Body of pancreas (tissue), 4 donors: ENCODE measurements at regions of chr9 and their contacts with region 1.

Region 1: GRCh38 chr9:74570879-74571512 is 73.9 kb downstream of the RORB start:
- DNase-seq: peak in 3 of 4 donors; percentile 12 to 32 (median 16)
- ATAC-seq: no peak
- H3K4me3 ChIP-seq: no peak overlapping the region
- H3K27ac ChIP-seq: no peak overlapping the region
- H3K4me1 ChIP-seq: no peaks in the 10 kb centered on the region
- H3K27me3 ChIP-seq: peaks cover 0 to 4% of the 10 kb centered on the region in 2 donors
- CTCF ChIP-seq: peak; percentile 17 to 84 (median 65)
- POLR2A ChIP-seq: no peak

Region 2: DNA sequence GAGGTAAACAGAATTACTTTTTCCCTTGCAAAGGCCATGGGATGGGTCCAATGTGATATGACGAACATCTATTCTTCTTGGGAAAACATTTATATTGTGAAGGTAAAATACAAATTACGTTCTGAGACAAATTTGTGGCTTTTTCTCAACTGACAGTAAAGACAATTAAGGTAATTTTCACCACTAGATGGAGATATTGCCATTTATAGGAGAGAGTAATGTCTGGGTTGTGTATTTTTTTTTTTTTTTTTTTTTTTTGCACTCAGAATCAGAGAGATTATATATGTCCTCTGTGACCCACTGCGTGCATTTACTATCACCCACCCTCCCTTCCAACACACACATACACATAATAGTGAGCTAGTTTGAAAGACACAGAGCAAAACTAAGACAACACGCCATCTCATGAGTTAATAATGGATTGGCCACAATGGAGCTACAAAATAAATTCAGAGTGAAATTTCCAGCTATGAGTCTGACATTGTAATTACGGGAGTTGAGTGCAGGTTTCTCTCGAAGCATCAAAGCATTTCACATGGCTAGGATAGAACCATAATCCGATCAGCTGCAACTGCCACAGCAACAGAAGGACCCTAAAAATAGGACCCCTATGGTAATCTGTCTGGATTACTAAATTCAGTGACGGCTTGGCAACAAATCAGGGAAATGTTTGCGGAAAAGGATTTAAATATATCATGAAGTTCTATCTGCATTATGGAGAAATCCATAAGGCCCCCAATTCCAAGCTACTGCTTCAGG is 1370.1 kb before region 1 on chr9:
- intact Hi-C with region 1: loop called (anchors 10 kb)
- DNase-seq: no peak
- ATAC-seq: peak; percentile 45
- H3K4me3 ChIP-seq: no peak overlapping the region
- H3K27ac ChIP-seq: no peak overlapping the region
- H3K4me1 ChIP-seq: no peaks in the 10 kb centered on the region
- H3K27me3 ChIP-seq: peaks cover 0 to 8% of the 10 kb centered on the region in 2 donors
- CTCF ChIP-seq: peak; percentile 25 to 64 (median 51)
- POLR2A ChIP-seq: no peak

Region 3: DNA sequence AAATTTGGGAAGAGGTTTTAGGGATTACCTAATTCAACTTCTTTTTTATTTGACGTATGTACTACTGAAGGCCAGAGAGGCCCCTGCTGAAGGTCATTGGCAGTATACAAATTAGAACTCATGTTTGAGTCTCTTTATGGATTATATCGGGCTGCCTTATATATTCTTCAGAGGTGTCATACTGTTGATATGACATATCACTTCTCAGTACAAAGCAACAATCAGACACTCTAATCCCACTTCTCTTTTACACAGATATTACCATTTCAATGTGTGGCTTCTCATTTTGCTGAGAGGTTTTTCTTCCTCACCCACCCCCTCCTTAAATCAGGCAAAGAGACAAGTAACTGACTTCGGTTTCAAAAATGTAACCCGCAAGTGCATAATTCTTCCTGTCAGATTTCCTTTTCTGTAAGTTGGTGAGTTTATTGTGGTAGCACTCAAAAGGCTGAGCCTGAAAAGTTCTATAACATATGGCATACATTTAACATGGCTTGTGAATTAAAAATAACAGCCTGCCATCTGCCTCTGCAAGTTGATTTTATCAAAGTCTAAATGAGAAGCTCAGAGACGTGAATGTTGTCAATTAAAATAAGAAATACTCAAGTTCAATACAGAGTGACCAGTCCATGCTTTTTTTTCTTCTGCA is 237.5 kb before region 1 on chr9:
- intact Hi-C with region 1: no loop called
- DNase-seq: no peak
- ATAC-seq: no peak
- H3K4me3 ChIP-seq: no peak overlapping the region
- H3K27ac ChIP-seq: no peak overlapping the region
- H3K4me1 ChIP-seq: peaks cover 11% of the 10 kb centered on the region
- H3K27me3 ChIP-seq: no peaks in the 10 kb centered on the region
- CTCF ChIP-seq: no peak
- POLR2A ChIP-seq: no peak

Region 4: GRCh38 chr9:74681906-74682305 is 110.9 kb after region 1 on chr9:
- intact Hi-C with region 1: no loop called
- DNase-seq: no peak
- ATAC-seq: no peak
- H3K4me3 ChIP-seq: no peak overlapping the region
- H3K27ac ChIP-seq: no peak overlapping the region
- H3K4me1 ChIP-seq: no peaks in the 10 kb centered on the region
- H3K27me3 ChIP-seq: no peaks in the 10 kb centered on the region
- CTCF ChIP-seq: no peak
- POLR2A ChIP-seq: no peak

Region 5: GRCh38 chr9:74729136-74729695 is 158.2 kb after region 1 on chr9:
- intact Hi-C with region 1: no loop called
- DNase-seq: no peak
- ATAC-seq: no peak
- H3K4me3 ChIP-seq: no peak overlapping the region
- H3K27ac ChIP-seq: no peak overlapping the region
- H3K4me1 ChIP-seq: no peaks in the 10 kb centered on the region
- H3K27me3 ChIP-seq: no peaks in the 10 kb centered on the region
- CTCF ChIP-seq: no peak
- POLR2A ChIP-seq: no peak